A673 (cell line): ENCODE measurements at regions of chr14 and their contacts with region 1.

Region 1: DNA sequence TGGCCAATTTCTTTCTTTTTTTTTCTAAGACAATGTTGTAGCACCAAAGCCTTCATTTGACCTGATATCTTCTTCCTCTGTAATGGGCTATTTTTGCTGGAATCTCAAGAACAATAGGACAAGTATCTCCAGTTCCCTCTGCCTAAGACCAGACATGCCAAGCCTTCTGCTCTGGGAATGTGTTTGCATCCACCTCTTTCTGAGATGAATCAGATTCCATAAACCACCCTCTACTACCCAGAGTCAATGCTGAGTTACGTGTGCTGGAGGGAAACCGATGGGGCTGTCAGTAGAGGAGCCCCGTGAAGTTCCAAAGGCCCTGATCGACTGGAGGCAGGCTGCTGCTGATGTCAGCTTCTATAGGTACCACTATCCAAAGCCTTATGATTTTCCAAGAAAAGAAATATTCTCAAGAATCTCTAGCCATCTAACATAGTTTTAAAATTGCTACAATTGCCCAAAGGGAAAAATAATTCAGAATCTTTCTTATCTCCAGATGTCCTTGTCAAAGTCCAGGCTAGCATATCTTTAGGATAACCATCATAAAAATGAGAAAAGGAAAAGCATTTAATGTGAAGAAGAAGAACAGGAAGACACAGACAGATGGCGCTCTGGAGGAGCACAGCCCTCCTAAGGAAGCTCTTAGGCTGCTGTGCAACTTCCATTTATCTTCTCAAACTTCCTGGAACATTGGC is 101.9 kb downstream of the SLC8A3 start:
- DNase-seq: peak; percentile 49
- H3K4me3 ChIP-seq: no peak overlapping the region
- H3K27ac ChIP-seq: no peak overlapping the region
- H3K4me1 ChIP-seq: no peaks in the 10 kb centered on the region
- H3K27me3 ChIP-seq: peaks cover 79% of the 10 kb centered on the region
- CTCF ChIP-seq: peak; percentile 65

Region 2: GRCh38 chr14:69043596-69044260 is 1043.1 kb before region 1 on chr14:
- CTCF ChIA-PET with region 1: no interaction called
- POLR2A ChIA-PET with region 1: no interaction called
- intact Hi-C with region 1: no loop called
- DNase-seq: no peak
- H3K4me3 ChIP-seq: no peak overlapping the region
- H3K27ac ChIP-seq: no peak overlapping the region
- H3K4me1 ChIP-seq: peaks cover 10% of the 10 kb centered on the region
- H3K27me3 ChIP-seq: no peaks in the 10 kb centered on the region
- CTCF ChIP-seq: no peak

Region 3: DNA sequence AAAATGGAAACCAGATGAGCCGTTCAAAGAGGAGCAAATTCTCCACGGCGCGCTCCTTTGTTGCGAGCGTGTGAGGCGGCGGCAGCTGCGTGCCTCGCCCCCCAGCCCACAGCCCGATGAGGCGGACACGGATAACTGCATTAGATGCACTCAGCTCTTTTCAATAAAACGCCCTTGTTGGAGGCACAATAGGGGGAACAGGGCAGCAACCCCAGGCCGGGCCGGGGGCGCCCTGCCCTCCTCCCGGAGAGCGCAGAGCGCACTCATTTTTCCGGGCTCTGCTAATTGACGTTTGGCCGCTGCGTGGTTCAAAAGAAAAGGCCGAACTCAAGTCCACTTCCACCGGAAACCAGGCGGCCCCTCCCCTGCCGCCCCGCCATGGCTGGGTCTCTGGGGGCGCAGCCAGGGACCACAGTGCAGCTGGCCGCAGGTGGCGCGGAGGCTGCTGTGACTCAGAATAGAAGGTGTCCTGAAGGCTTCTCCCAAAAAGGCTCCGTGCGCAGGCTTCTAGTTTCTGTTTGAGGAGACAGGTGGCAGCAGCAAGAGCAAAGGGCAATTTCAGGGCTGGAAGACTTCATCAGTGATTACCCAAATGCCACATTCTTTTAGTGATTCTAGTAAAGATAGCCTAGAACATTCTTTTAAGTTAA is 236.6 kb before region 1 on chr14:
- CTCF ChIA-PET with region 1: no interaction called
- POLR2A ChIA-PET with region 1: no interaction called
- intact Hi-C with region 1: no loop called
- DNase-seq: no peak
- H3K4me3 ChIP-seq: no peak overlapping the region
- H3K27ac ChIP-seq: no peak overlapping the region
- H3K4me1 ChIP-seq: no peaks in the 10 kb centered on the region
- H3K27me3 ChIP-seq: peaks cover 22% of the 10 kb centered on the region
- CTCF ChIP-seq: no peak

Region 4: GRCh38 chr14:70317969-70318634 is 231.3 kb after region 1 on chr14:
- CTCF ChIA-PET with region 1: no interaction called
- POLR2A ChIA-PET with region 1: no interaction called
- intact Hi-C with region 1: loop called (anchors 5 kb)
- DNase-seq: peak; percentile 39
- H3K4me3 ChIP-seq: no peak overlapping the region
- H3K27ac ChIP-seq: no peak overlapping the region
- H3K4me1 ChIP-seq: no peaks in the 10 kb centered on the region
- H3K27me3 ChIP-seq: no peaks in the 10 kb centered on the region
- CTCF ChIP-seq: peak; percentile 49

Region 5: DNA sequence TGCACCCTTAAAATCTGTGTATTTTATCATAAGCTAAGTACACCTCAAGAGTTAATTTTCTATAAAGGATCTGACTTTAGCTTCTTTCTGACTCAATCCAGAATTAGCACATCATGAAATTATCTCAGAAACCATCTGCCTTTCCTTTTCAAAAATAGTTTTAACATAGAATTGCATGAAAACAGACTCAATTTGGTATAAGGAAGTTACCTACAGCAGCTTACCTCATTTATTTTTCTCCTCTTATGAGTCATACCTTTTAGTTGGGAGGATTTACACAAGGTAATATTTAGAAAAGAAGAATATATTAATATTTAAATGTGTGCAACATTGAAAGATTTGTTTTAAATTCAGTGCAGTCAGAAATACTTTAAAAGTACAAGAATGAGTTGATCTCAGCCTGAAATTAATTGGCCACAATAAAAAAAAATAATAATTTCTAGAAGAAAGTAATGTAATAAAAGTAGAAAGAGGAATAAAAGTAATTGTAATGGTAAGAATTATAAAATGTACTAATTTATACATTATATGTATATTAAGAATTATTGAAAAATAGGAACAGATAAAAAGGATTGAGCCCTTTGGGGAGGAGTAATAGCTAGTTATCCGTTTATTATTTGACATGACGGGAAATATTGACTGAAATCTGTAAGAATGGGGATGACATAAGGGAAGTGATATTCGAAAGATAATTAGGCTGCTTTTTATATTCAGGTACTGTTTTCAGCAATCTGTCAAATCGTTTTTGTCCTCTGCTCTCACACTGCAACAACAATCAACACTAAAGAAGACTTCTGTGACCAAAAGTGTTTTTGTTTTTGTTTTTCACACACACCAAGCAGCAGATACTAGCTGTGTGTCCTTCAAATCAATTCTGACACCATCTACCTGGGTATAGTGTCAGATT is 385.7 kb after region 1 on chr14:
- CTCF ChIA-PET with region 1: no interaction called
- POLR2A ChIA-PET with region 1: no interaction called
- intact Hi-C with region 1: no loop called
- DNase-seq: no peak
- H3K4me3 ChIP-seq: no peak overlapping the region
- H3K27ac ChIP-seq: no peak overlapping the region
- H3K4me1 ChIP-seq: no peaks in the 10 kb centered on the region
- H3K27me3 ChIP-seq: no peaks in the 10 kb centered on the region
- CTCF ChIP-seq: no peak

Region 6: GRCh38 chr14:70567791-70568190 is 481.0 kb after region 1 on chr14:
- CTCF ChIA-PET with region 1: interaction called, 5 read pairs
- POLR2A ChIA-PET with region 1: no interaction called
- intact Hi-C with region 1: loop called (anchors 2 kb)
- DNase-seq: peak; percentile 48
- H3K4me3 ChIP-seq: no peak overlapping the region
- H3K27ac ChIP-seq: no peak overlapping the region
- H3K4me1 ChIP-seq: no peaks in the 10 kb centered on the region
- H3K27me3 ChIP-seq: no peaks in the 10 kb centered on the region
- CTCF ChIP-seq: peak; percentile 64